BJ (cell line): ENCODE measurements at regions of chr1 and their contacts with region 1.

Region 1: GRCh38 chr1:199948587-199949280 is 78.8 kb upstream of the NR5A2 start:
- DNase-seq: no peak
- H3K4me3 ChIP-seq: no peak overlapping the region
- H3K27me3 ChIP-seq: no peaks in the 10 kb centered on the region
- CTCF ChIP-seq: no peak

Region 2: GRCh38 chr1:199909135-199909534 is 39.6 kb before region 1 on chr1:
- CTCF ChIA-PET with region 1: no interaction called
- POLR2A ChIA-PET with region 1: interaction called, 12 read pairs
- DNase-seq: no peak
- H3K4me3 ChIP-seq: no peak overlapping the region
- H3K27me3 ChIP-seq: no peaks in the 10 kb centered on the region
- CTCF ChIP-seq: no peak